ENCODE measurements at regions of chr2 and their contacts with region 1.

Region 1: GRCh38 chr2:199979832-199980628 is 24.6 kb downstream of the MAIP1 start:
- DNase-seq: peak; percentile 91
- H3K4me3 Mint-ChIP-seq: peak overlapping the region; percentile 27
- H3K27ac Mint-ChIP-seq: peak overlapping the region; percentile 51
- H3K4me1 Mint-ChIP-seq: peaks cover 56% of the 10 kb centered on the region
- H3K27me3 Mint-ChIP-seq: no peaks in the 10 kb centered on the region
- CTCF ChIP-seq: peak; percentile 85

Region 2: DNA sequence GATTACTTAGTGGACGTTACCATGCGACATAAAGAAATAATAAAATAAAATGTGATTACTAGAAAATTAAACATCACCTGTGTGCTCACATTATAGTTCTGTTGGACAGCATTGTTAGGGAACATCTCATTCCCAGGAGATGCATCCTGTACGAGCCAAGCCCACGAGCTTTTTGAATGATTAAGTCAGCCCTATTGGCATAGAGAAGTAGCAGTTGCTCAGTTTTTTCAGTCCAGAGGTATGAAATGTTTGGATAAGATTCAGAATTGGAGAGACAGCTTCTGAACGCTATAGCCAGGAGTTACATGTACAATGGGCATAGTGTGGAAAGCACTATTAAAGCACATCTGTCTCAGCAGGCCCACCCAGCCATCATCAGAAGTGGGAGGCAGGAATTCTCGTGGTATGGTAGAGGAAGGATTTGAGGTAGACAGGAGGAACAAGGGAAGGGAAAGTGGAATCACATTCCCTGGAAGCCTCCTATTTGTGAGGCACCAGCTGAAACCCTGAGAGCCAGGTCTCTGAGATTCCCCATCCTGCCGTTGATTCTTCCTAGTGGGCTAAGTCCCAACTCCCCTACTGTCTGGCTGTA is 335.0 kb after region 1 on chr2:
- CTCF ChIA-PET with region 1: no interaction called
- intact Hi-C with region 1: no loop called
- DNase-seq: no peak
- H3K4me3 Mint-ChIP-seq: peak overlapping the region; percentile 24
- H3K27ac Mint-ChIP-seq: peak overlapping the region; percentile 59
- H3K4me1 Mint-ChIP-seq: peaks cover 90% of the 10 kb centered on the region
- H3K27me3 Mint-ChIP-seq: no peaks in the 10 kb centered on the region
- CTCF ChIP-seq: no peak

Region 3: GRCh38 chr2:200405599-200406298 is 425.7 kb after region 1 on chr2:
- CTCF ChIA-PET with region 1: interaction called, 5 read pairs
- intact Hi-C with region 1: loop called (anchors 10 kb)
- DNase-seq: peak; percentile 58
- H3K4me3 Mint-ChIP-seq: peak overlapping the region; percentile 61
- H3K27ac Mint-ChIP-seq: peak overlapping the region; percentile 85
- H3K4me1 Mint-ChIP-seq: peaks cover 87% of the 10 kb centered on the region
- H3K27me3 Mint-ChIP-seq: no peaks in the 10 kb centered on the region
- CTCF ChIP-seq: no peak

Region 4: DNA sequence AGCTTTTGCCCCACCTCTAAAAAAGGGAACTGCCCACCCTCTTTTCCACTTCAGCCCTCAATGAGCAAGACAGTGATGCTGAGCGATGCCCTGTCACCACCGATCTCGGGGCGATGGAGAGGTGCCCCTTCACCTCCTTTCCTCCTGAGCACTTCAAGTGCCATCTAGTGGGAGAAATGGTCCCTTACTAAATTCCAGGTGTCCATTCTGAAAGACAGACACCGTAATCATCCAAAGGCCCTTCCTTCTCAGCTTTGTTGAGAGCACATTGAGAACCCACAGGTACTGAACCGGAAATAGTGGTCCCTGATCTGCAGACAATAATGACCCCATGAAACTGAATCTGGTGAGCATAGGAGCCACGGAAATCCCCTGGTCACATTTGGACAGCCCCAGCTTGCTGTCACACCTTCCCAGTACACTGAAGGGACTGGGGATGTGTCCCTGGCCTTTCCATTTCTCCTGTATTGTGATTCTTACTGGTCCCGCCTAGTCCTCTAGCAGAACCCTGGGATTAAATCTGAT is 491.4 kb after region 1 on chr2:
- CTCF ChIA-PET with region 1: no interaction called
- intact Hi-C with region 1: loop called (anchors 1 kb)
- DNase-seq: peak; percentile 18
- H3K4me3 Mint-ChIP-seq: no peak overlapping the region
- H3K27ac Mint-ChIP-seq: peak overlapping the region; percentile 2
- H3K4me1 Mint-ChIP-seq: no peaks in the 10 kb centered on the region
- H3K27me3 Mint-ChIP-seq: no peaks in the 10 kb centered on the region
- CTCF ChIP-seq: peak; percentile 65

Region 5: DNA sequence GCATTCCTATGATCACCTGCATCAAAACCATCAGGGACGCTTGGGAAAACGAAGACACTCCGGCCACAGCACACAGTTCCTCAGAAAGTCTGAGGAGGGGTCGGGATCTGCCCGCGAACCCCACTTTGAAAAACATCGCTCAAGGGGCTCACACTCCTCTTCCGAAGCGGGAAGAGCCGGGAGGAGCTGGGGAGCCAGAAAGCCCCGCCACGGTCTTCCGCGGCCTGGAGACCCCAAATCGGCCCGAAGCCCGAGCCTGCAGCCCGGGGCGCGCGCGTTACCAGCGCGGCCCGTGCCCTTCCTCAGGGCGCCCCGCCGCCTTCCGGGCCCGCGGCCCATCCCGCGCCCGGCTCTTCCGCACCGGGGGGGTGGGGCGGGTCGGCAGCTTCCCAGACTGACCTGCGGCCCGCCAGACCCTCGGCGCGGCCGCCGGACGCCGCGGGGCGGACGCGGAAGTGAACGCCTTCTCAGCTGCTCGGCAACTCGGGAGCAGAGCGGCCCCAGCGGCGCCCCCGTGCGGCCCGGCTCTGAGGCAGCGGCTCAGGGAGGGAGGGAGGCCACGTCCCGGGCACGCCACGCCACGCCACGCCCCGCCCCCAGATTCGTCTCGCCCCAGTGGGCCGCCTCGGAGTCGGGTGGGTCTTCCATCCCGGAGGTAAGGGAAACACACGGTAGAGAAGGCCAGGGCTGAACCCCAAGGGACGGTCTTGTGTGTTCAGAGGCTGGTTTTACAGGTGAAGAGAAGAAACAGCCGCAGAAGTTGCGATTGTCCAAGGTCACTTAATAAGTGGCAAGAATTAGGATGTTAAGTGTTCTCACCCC is 529.8 kb after region 1 on chr2 and contains the start of gene KCTD18:
- CTCF ChIA-PET with region 1: no interaction called
- intact Hi-C with region 1: loop called (anchors 2 kb)
- DNase-seq: peak; percentile 94
- H3K4me3 Mint-ChIP-seq: peak within 1 kb of the TSS; percentile 83
- H3K27ac Mint-ChIP-seq: peak within 1 kb of the TSS; percentile 60
- H3K4me1 Mint-ChIP-seq: peaks cover 10% of the 10 kb centered on the region
- H3K27me3 Mint-ChIP-seq: no peaks in the 10 kb centered on the region
- CTCF ChIP-seq: peak; percentile 69
- total RNA-seq, gene KCTD18: 11.8 and 13.6 TPM in 2 replicates

Measured in Calu3 (cell line).